Esophagus squamous epithelium (tissue), 5 donors: ENCODE measurements at regions of chr12 and their contacts with region 1.

Region 1: GRCh38 chr12:79531122-79531913 is 159.4 kb downstream of the PAWR start:
- DNase-seq: no peak
- H3K4me3 ChIP-seq: no peak overlapping the region
- H3K27ac ChIP-seq: no peak overlapping the region
- H3K4me1 ChIP-seq: no peaks in the 10 kb centered on the region
- H3K27me3 ChIP-seq: no peaks in the 10 kb centered on the region
- CTCF ChIP-seq: no peak
- POLR2A ChIP-seq: no peak

Region 2: DNA sequence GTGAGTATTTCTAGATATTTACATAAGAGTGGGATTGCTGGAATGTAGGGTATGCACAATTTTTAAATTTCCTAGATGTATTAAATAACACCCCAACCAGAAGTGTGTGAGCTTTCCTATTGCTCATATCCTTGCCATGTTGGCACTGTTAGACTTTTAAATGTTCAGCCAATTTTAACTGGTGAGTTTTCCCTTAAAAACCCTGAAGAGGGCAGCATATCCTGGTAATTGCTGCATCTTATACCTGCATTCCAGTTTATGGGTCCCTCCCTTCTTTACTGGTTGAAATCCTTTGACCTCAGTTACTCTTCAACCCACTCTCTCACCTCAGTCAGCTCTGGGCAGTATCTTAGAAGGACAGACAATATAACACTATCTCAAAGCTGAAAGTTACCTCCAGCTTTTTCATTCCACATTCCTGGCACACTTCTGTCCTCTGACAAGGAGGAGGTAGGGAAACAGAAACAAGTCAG is 111.1 kb before region 1 on chr12:
- intact Hi-C with region 1: loop called (anchors 10 kb)
- DNase-seq: no peak
- H3K4me3 ChIP-seq: no peak overlapping the region
- H3K27ac ChIP-seq: peak overlapping the region in 1 of 4 donors; percentile 38
- H3K4me1 ChIP-seq: peaks cover 0 to 71% (median 18%) of the 10 kb centered on the region in 3 donors
- H3K27me3 ChIP-seq: no peaks in the 10 kb centered on the region
- CTCF ChIP-seq: peak; percentile 9 to 76 (median 50)
- POLR2A ChIP-seq: no peak

Region 3: DNA sequence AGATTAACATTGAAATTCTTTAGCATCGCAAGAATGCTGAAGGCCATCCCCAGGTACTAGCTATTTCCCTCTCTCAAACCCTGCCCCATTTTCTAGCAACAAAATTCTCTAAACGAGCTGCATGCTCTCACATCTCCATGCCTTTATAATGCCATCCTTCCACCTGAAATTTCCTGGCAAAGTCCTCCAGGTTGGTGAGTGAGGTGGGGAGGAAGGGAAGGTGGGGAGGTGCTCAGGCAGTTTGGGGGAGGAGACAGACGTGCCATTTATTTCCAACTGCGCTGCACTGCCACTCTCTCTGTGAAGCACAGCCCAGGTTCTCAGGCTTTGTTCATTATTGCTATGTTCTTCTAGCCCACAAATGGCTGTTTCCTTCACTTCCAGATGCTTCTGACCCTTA is 49.0 kb before region 1 on chr12:
- intact Hi-C with region 1: no loop called
- DNase-seq: no peak
- H3K4me3 ChIP-seq: no peak overlapping the region
- H3K27ac ChIP-seq: no peak overlapping the region
- H3K4me1 ChIP-seq: no peaks in the 10 kb centered on the region
- H3K27me3 ChIP-seq: no peaks in the 10 kb centered on the region
- CTCF ChIP-seq: no peak
- POLR2A ChIP-seq: no peak

Region 4: DNA sequence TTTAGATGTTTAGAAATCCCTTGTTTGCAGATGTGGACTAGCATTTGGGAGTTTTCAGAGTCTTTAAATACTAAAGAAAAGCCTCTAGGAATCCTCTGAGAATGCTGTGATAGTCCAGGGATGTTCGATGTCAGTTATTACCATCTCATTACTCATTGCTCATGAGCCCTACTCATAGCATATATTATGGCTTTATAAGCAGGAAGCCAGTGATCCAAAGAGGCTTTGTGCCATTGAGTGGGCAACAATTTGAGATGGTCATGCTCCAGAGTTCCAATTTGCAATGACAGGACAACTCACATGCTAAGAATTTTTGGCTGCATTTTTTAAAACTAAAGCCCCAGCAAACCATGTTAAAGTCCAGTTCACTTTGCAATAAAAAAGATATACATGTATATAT is 731.0 kb after region 1 on chr12:
- intact Hi-C with region 1: no loop called
- DNase-seq: no peak
- H3K4me3 ChIP-seq: no peak overlapping the region
- H3K27ac ChIP-seq: no peak overlapping the region
- H3K4me1 ChIP-seq: no peaks in the 10 kb centered on the region
- H3K27me3 ChIP-seq: no peaks in the 10 kb centered on the region
- CTCF ChIP-seq: no peak
- POLR2A ChIP-seq: no peak